SK-N-SH (cell line): ENCODE measurements at regions of chr13 and their contacts with region 1.

Region 1: GRCh38 chr13:39037880-39038568 is at the starts of genes NHLRC3 and PROSER1:
- DNase-seq: peak; percentile 87
- H3K4me3 ChIP-seq: peak within 1 kb of the TSS; percentile 73 to 100
- H3K27ac ChIP-seq: peak within 1 kb of the TSS; percentile 71 to 97
- H3K4me1 ChIP-seq: peaks cover 7 to 16% of the 10 kb centered on the region in 2 experiments; a peak in 3 of 4 replicates
- H3K27me3 ChIP-seq: no peaks in the 10 kb centered on the region
- CTCF ChIP-seq: no peak
- EP300 ChIP-seq: no peak
- RAD21 ChIP-seq: no peak
- polyA plus RNA-seq, gene NHLRC3: 7.1 and 11.4 TPM in 2 replicates
- polyA plus RNA-seq, gene PROSER1: 14.7 and 14.8 TPM in 2 replicates

Region 2: GRCh38 chr13:38979891-38980749 is 57.9 kb before region 1 on chr13:
- CTCF ChIA-PET with region 1: no interaction called
- POLR2A ChIA-PET with region 1: interaction called, 13 read pairs
- DNase-seq: peak; percentile 45
- H3K4me3 ChIP-seq: no peak overlapping the region
- H3K27ac ChIP-seq: peak overlapping the region in 1 of 2 experiments; percentile 87; a peak in 2 of 4 replicates
- H3K4me1 ChIP-seq: peaks cover 0 to 13% of the 10 kb centered on the region in 2 experiments; a peak in 2 of 4 replicates
- H3K27me3 ChIP-seq: no peaks in the 10 kb centered on the region
- CTCF ChIP-seq: no peak
- EP300 ChIP-seq: peak in 1 of 2 experiments; percentile 59; a peak in 1 of 4 replicates
- RAD21 ChIP-seq: no peak